A549 (cell line): ENCODE measurements at regions of chr2 and their contacts with region 1.

Region 1: DNA sequence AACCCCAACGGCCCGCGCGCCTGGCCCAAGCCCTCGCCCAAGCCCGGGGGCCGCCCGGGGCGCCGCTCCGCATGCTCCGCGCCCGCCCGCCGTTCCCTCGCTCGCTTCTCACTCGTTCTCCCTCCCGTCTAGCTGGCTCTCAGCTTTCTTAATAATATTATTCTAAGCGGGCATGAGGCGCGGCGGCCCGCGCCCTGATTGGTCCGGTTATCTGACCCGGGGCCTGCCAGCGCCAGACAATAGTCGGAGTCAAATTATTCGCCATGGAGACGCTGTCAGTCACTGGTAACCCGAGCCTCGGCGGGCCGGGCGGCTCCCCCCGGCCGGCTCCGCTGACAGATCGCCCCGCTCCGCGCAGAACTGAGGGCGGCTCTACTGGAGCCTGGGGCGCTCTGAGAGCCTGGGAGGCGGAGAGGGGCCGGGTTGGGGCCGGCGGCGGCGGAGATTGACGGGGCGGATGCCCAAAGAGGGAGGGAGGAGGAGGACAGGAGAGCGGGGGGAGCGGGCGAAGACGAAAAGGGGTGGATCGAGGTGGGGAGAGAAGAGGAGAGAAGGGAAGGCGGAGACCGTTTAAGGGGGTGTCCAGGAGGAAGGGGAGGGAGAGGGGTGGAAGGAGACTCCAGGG is at the start of gene SIX2:
- DNase-seq: peak; percentile 78 to 81
- ATAC-seq: peak; percentile 55 to 80
- H3K4me3 ChIP-seq: peak within 1 kb of the TSS; percentile 65
- H3K27ac ChIP-seq: peak within 1 kb of the TSS; percentile 59 to 76
- H3K4me1 ChIP-seq: peaks cover 9% of the 10 kb centered on the region; the same call in 2 of the 3 replicates
- CTCF ChIP-seq: no peak
- EP300 ChIP-seq: no peak
- POLR2A ChIP-seq: no peak
- RAD21 ChIP-seq: no peak
- polyA plus RNA-seq, gene SIX2: 0.10 and 0.13 TPM in 2 replicates

Region 2: DNA sequence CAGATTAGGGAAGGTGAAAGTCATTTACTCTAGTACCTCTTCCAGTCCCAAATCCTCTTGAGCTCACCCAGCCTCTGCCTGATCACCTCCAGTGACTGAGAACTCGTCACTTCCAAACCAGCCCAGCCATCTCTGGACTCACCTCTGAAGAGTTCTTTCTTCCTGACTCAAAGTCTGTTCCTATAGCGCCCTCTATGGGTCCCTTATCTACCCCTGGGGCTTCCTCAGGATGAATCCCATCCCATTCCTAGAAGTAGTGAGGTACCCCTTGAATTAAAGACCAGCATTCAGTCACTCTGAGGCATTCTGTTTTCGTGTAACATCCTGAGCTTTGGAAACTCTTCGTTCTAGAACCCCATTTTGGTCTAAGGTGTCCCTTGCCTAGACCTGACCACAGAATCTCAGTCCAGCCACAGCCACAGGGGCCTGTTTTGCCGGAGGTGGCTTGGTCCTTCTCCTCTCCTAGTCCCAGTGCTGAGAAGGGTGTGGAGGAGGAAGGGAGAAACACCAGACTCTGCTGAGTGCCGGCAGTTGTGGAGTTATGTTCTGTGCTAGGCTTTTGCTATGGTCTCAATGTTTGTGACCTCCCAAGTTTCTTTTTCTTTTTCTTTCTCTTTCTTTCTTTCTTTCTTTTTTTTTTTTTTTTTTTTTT is 35.2 kb before region 1 on chr2:
- CTCF ChIA-PET with region 1: interaction called, 170 read pairs
- POLR2A ChIA-PET with region 1: no interaction called
- DNase-seq: peak; percentile 77 to 79
- ATAC-seq: peak; percentile 73 to 90; a peak in 5 of 6 replicates
- H3K4me3 ChIP-seq: no peak overlapping the region
- H3K27ac ChIP-seq: no peak overlapping the region; a peak in 1 of 6 replicates
- H3K4me1 ChIP-seq: peaks cover 8% of the 10 kb centered on the region; the same call in 1 of the 3 replicates
- CTCF ChIP-seq: peak; percentile 64
- EP300 ChIP-seq: no peak
- POLR2A ChIP-seq: no peak
- RAD21 ChIP-seq: peak; percentile 70 to 86

Region 3: DNA sequence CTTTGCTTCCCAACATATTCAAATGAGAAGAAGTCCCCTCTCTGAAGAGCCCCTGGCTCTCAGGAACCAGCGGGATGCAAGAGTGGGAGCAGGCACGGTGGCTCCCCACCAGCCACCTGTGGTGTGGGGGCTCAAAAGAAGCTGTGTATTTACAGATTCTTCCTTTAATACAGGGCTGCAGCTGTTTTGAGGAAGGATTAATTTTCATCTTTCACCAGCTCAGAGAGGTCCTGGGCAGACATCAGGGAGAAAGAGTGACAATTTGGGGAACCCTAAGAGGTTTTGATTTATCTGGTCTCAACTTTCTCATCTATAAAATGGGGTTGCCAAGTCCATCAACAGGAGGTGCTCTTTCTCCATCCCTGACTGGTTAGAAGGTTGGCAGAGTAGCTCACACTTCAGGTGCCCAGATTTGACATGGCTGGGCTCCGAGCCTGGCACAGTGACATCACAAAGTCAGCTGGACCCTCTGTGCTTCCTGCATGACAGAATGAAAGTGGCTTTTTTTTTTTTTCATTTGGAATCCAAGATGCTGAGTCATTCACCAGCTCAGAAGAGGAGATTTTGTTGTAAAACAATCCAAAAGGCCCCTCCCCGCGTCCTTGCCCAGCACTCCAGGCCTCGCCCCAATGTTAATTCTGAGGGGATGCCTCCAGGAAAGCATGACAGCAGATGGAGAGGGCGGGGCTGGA is 15.3 kb after region 1 on chr2:
- CTCF ChIA-PET with region 1: interaction called, 76 read pairs
- POLR2A ChIA-PET with region 1: interaction called, 8 read pairs
- DNase-seq: peak; percentile 72 to 89
- ATAC-seq: peak; percentile 73 to 85
- H3K4me3 ChIP-seq: no peak overlapping the region
- H3K27ac ChIP-seq: peak overlapping the region; percentile 50 to 82
- H3K4me1 ChIP-seq: peaks cover 18% of the 10 kb centered on the region
- CTCF ChIP-seq: peak; percentile 70
- EP300 ChIP-seq: no peak
- POLR2A ChIP-seq: no peak
- RAD21 ChIP-seq: peak; percentile 63 to 77